ENCODE measurements at regions of chr2 and their contacts with region 1.

Region 1: GRCh38 chr2:9142551-9143263 is 63.9 kb upstream of the ASAP2 start:
- DNase-seq: peak; percentile 85 to 97
- H3K4me3 ChIP-seq: peak overlapping the region; percentile 23; the same call in 1 of the 2 replicates
- H3K27ac ChIP-seq: peak overlapping the region; percentile 45
- H3K4me1 ChIP-seq: peaks cover 60% of the 10 kb centered on the region
- H3K27me3 ChIP-seq: no peaks in the 10 kb centered on the region
- CTCF ChIP-seq: peak; percentile 99

Region 2: GRCh38 chr2:8681786-8682692 is 460.7 kb before region 1 on chr2 and contains the start of gene ID2:
- CTCF ChIA-PET with region 1: no interaction called
- POLR2A ChIA-PET with region 1: no interaction called
- intact Hi-C with region 1: loop called (anchors 10 kb)
- DNase-seq: peak; percentile 82 to 91
- H3K4me3 ChIP-seq: peak within 1 kb of the TSS; percentile 59
- H3K27ac ChIP-seq: no peak within 1 kb of the TSS
- H3K4me1 ChIP-seq: no peaks in the 10 kb centered on the region; the same call in 1 of the 2 replicates
- H3K27me3 ChIP-seq: peaks cover 62% of the 10 kb centered on the region
- CTCF ChIP-seq: no peak
- total RNA-seq, gene ID2: 0.61 and 0.95 TPM in 2 replicates

Region 3: GRCh38 chr2:9178904-9179571 is 36.3 kb after region 1 on chr2:
- CTCF ChIA-PET with region 1: interaction called, 7 read pairs
- POLR2A ChIA-PET with region 1: no interaction called
- intact Hi-C with region 1: loop called (anchors 1 kb)
- DNase-seq: peak; percentile 54 to 89
- H3K4me3 ChIP-seq: peak overlapping the region; percentile 18; the same call in 1 of the 2 replicates
- H3K27ac ChIP-seq: peak overlapping the region; percentile 90
- H3K4me1 ChIP-seq: peaks cover 69% of the 10 kb centered on the region
- H3K27me3 ChIP-seq: no peaks in the 10 kb centered on the region
- CTCF ChIP-seq: no peak

Region 4: DNA sequence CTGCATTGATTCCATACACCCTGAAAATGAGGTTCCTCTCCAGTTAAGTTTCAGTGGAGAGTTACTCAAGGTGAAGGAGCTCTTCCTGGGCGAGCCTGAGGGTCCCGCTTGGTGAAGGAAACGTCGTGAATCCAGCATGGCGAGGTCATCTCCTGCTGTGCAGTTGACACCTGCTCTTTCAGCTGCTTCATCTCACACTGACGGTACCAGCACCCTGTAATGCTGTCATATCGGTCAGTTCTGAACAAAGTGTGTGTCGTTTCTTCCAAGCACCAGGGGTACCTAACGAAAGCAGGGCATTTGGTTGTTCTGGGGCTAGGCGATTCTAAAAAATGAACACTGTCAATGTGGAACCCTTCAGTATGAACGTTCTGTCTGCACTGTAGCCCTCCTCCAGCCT is 228.0 kb after region 1 on chr2:
- CTCF ChIA-PET with region 1: no interaction called
- POLR2A ChIA-PET with region 1: no interaction called
- intact Hi-C with region 1: loop called (anchors 2 kb)
- DNase-seq: no peak
- H3K4me3 ChIP-seq: no peak overlapping the region
- H3K27ac ChIP-seq: no peak overlapping the region
- H3K4me1 ChIP-seq: no peaks in the 10 kb centered on the region
- H3K27me3 ChIP-seq: no peaks in the 10 kb centered on the region
- CTCF ChIP-seq: no peak

Region 5: GRCh38 chr2:9423100-9423921 is 280.6 kb after region 1 on chr2 and contains the starts of genes CPSF3 and ITGB1BP1:
- CTCF ChIA-PET with region 1: no interaction called
- POLR2A ChIA-PET with region 1: no interaction called
- intact Hi-C with region 1: loop called (anchors 2 kb)
- DNase-seq: peak; percentile 97 to 98
- H3K4me3 ChIP-seq: peak within 1 kb of the TSS; percentile 80
- H3K27ac ChIP-seq: peak within 1 kb of the TSS; percentile 24
- H3K4me1 ChIP-seq: peaks cover 22% of the 10 kb centered on the region
- H3K27me3 ChIP-seq: no peaks in the 10 kb centered on the region
- CTCF ChIP-seq: no peak
- total RNA-seq, gene CPSF3: 52.0 and 61.5 TPM in 2 replicates
- total RNA-seq, gene ITGB1BP1: 68.1 and 82.5 TPM in 2 replicates

Measured in PC-9 (cell line).